Activated CD8-positive, alpha-beta memory T cell treated with anti-CD3 and anti-CD28 coated beads, Interleukin-2, amount 10 ng/mL, durations not matched to agents 7 days and 5 days (primary cell): ENCODE measurements at regions of chr4 and their contacts with region 1.

Region 1: GRCh38 chr4:47686294-47686872 is 151.5 kb downstream of the CORIN start:
- DNase-seq: peak; percentile 71
- ATAC-seq: peak; percentile 66
- H3K4me3 Mint-ChIP-seq: no peak overlapping the region
- H3K27ac Mint-ChIP-seq: no peak overlapping the region
- H3K4me1 Mint-ChIP-seq: no peaks in the 10 kb centered on the region
- H3K27me3 Mint-ChIP-seq: peaks cover 21% of the 10 kb centered on the region

Region 2: DNA sequence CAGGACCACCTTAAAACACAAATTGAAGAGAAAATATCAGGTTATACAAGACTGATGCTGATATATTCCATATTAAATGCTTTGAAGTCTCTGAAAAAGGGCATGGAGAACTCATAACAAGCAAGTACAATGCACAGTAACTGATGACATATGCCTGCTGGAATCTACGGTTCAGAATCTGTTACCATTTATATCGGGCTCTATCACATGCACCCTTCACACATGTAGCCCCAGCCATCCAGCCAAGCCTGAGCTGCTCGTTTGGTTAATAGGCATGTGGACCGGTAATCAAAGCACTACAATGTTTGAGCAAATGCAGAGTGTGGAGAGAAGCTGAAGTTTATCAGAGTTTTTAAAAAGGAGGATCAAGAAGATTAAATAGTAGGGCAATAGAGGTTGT is 234.7 kb before region 1 on chr4:
- CTCF ChIA-PET with region 1: no interaction called
- DNase-seq: no peak
- ATAC-seq: no peak
- H3K4me3 Mint-ChIP-seq: no peak overlapping the region
- H3K27ac Mint-ChIP-seq: no peak overlapping the region
- H3K4me1 Mint-ChIP-seq: no peaks in the 10 kb centered on the region
- H3K27me3 Mint-ChIP-seq: no peaks in the 10 kb centered on the region

Region 3: DNA sequence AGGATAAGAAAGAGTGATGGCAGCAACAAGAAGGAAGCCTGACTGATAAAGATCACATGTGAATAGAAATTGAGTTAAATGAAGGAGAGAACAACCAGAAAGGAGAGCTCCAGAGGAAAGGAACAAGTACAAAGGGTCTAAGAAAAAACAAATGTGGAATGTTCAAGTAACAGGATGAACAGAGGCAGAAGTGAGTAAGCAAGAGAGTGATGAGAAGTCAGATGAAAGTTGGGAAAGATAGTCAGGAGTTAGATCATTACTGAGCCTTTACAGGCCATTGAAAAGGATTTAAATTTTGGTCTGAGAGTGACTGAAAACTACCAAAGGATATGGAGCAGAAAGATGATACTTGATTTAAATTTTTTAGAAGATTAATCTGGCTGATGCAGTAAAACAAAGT is 189.9 kb after region 1 on chr4:
- CTCF ChIA-PET with region 1: no interaction called
- DNase-seq: no peak
- ATAC-seq: no peak
- H3K4me3 Mint-ChIP-seq: no peak overlapping the region
- H3K27ac Mint-ChIP-seq: no peak overlapping the region
- H3K4me1 Mint-ChIP-seq: peaks cover 11% of the 10 kb centered on the region
- H3K27me3 Mint-ChIP-seq: no peaks in the 10 kb centered on the region

Region 4: GRCh38 chr4:47933840-47934239 is 247.5 kb after region 1 on chr4:
- CTCF ChIA-PET with region 1: interaction called, 12 read pairs
- DNase-seq: no peak
- ATAC-seq: no peak
- H3K4me3 Mint-ChIP-seq: no peak overlapping the region
- H3K27ac Mint-ChIP-seq: no peak overlapping the region
- H3K4me1 Mint-ChIP-seq: no peaks in the 10 kb centered on the region
- H3K27me3 Mint-ChIP-seq: peaks cover 27% of the 10 kb centered on the region